K562 (cell line): ENCODE measurements at regions of chr5 and their contacts with region 1.

Region 1: DNA sequence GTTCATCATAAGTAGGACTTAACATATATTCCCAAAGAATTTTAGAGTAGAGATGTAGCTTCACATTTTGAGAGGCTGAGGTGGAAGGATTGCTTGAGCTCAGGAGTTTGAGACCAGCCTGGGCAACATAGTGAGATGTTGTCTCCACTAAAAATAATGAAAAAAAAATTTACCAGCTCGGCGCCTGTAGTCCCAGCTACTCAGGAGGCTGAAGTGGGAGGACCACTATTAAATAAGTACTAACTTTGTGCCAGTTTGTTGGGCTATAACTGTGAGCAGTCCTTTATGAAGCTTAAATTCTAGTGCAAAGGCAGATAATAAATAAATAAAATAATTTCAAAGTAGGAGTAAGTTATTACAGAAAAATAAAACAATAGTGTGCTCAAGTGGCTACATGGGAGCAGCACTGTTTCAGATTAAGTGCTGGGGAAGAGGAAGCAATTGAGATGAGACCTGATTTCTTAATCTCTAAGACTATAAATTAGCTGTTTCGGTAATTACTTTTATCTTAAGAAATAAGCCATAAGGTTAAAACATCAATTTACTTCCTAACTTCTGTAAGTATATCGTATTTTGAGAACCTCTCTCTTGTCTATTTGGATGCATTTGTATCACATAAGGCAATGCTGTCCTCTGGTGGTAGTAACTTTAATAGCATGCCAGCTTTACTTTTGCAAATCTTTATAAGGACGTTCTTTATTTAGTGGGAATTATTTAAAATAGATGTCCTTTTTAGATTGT is 98.9 kb downstream of the CSNK1G3 start:
- DNase-seq: peak; percentile 30 to 59 (median 42)
- ATAC-seq: peak; percentile 71
- H3K4me3 ChIP-seq: no peak overlapping the region
- H3K27ac ChIP-seq: no peak overlapping the region
- H3K4me1 ChIP-seq: no peaks in the 10 kb centered on the region
- H3K27me3 ChIP-seq: no peaks in the 10 kb centered on the region
- CTCF ChIP-seq: peak; percentile 51 to 92 (median 63); a peak in 5 of 6 replicates
- EP300 ChIP-seq: no peak
- POLR2A ChIP-seq: no peak
- RAD21 ChIP-seq: peak; percentile 91 to 95

Region 2: DNA sequence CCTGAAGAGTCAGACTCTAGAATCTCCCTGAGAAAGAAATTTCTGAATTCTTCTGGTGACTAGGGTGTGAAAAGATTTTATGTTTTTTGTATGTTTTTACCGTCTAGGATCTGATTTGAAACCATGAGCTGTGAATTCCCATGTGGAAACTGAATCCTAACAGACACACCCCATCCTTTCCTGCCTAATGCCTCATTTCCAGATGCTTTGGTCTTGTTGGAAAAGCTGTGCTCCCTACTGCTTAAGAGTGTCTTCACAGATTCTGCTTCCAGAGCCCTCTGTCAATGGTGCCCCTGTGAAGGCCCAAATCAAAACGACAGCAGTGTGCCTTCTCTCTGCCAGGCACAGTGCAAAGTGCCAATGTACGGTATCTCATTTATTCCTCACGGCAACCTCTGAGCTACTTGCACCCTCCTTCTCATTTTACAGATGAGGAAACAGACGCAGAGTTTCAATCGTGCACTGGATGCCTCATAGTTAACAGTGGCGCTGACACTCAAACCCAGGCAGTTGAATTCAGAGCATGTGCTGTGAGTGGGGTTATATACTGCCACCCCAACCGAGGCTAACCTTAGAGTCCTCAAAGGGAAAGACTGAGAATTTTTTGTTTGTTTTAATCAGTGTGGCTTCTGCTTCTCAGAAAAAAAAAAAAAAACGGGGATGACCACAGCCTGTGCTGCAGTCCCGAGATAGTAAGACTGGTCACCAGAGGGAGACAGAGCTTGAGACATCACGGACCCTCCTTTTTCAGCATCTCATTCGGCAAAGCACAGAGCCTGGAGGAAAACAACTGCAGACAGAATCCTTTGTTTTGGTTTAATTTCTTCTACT is 1110.4 kb before region 1 on chr5:
- CTCF ChIA-PET with region 1: interaction called, 7 read pairs
- POLR2A ChIA-PET with region 1: no interaction called
- in situ Hi-C with region 1: loop called (anchors 25 kb)
- intact Hi-C with region 1: loop called (anchors 5 kb)
- DNase-seq: peak; percentile 12 to 51 (median 34)
- ATAC-seq: peak; percentile 92
- H3K4me3 ChIP-seq: no peak overlapping the region
- H3K27ac ChIP-seq: no peak overlapping the region
- H3K4me1 ChIP-seq: no peaks in the 10 kb centered on the region
- H3K27me3 ChIP-seq: no peaks in the 10 kb centered on the region; a peak in 1 of 5 replicates
- CTCF ChIP-seq: peak; percentile 54 to 71 (median 63)
- EP300 ChIP-seq: no peak
- POLR2A ChIP-seq: no peak
- RAD21 ChIP-seq: peak in 1 of 2 experiments; percentile 57; a peak in 3 of 4 replicates

Region 3: DNA sequence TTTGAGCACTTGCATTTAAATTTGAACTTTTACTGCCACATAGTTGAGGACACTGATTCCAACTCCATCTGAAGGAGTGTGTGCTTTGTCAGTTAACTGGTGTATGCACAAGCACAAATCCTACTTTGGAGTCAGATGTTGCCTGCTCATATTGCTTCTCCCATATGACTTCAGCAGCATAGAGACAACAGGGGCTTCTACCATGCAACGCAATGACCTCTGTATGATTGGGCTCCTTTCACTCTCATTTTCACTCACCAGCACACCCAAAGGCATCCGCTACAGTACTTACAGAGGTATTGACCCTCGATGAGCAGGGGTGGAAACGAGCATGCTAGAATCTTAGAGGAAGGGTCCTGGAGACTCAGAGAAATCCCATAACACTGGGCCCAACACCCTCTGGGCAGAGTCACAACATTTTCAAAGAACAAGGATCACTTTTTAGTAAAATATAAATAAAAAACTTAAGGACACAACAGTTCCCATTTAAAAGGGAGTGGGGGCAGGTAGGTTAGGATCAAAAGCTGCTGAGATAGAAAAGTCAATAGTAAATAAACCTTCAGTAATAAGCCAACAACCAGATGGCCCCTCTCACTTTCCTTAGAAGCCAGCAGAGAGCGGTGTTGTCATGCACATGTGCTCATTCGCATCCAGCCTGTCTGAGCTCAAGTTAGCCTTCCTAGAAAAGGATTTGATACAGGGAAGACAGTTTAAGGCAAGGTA is 1095.0 kb before region 1 on chr5:
- CTCF ChIA-PET with region 1: no interaction called
- POLR2A ChIA-PET with region 1: no interaction called
- in situ Hi-C with region 1: loop called (anchors 25 kb)
- intact Hi-C with region 1: no loop called
- DNase-seq: peak; percentile 29 to 63 (median 36)
- ATAC-seq: peak; percentile 92
- H3K4me3 ChIP-seq: no peak overlapping the region
- H3K27ac ChIP-seq: no peak overlapping the region
- H3K4me1 ChIP-seq: no peaks in the 10 kb centered on the region
- H3K27me3 ChIP-seq: no peaks in the 10 kb centered on the region; a peak in 1 of 5 replicates
- CTCF ChIP-seq: peak; percentile 63 to 80 (median 67)
- EP300 ChIP-seq: no peak
- POLR2A ChIP-seq: no peak
- RAD21 ChIP-seq: peak; percentile 84 to 89

Region 4: DNA sequence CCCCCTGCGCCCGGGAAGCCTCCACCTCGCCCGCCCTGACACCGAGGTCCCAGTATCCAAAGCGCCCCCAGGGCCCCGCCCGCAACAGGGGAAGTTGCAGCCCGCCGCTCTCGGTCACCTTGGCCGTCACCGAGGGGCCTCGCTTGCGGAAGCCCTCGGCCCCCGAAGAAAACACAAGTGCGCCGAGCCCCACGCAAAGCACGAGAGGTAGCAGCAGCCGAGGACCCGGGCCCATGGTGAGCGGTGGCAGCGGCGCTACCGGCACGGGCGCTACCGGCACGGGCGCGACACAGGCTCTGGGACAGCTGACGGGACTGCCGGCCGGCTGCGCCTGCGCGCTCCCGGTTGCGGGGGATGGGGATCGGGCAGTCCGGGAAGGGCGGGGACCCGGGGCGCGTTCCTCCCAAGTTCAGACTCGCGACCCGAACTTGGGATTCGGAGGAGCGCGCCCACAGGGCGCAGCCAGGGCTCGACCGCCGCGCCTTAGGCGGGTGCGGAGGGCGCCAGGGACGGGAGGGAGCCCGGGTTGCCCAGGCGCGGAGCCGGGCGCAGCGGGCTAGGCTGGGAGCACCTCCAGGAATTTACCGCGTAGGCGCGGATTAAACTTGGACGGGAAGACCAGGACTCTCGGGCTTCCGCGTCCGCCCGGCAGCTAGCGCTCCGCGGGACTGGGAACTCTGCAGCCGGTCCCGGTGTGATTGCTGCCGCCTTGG is 574.3 kb before region 1 on chr5 and contains the start of gene PPIC:
- CTCF ChIA-PET with region 1: no interaction called
- POLR2A ChIA-PET with region 1: no interaction called
- in situ Hi-C with region 1: no loop called
- intact Hi-C with region 1: loop called (anchors 10 kb)
- DNase-seq: peak; percentile 69 to 83 (median 74)
- ATAC-seq: peak; percentile 89
- H3K4me3 ChIP-seq: peak within 1 kb of the TSS; percentile 55
- H3K27ac ChIP-seq: no peak within 1 kb of the TSS
- H3K4me1 ChIP-seq: peaks cover 2 to 18% of the 10 kb centered on the region in 2 experiments; a peak in 2 of 5 replicates
- H3K27me3 ChIP-seq: peaks cover 7 to 21% of the 10 kb centered on the region in 2 experiments; a peak in 4 of 5 replicates
- CTCF ChIP-seq: no peak
- EP300 ChIP-seq: no peak
- POLR2A ChIP-seq: no peak
- RAD21 ChIP-seq: no peak
- polyA plus RNA-seq, gene PPIC: 1.3 to 2.8 TPM

Region 5: GRCh38 chr5:123209502-123210012 is 401.3 kb before region 1 on chr5:
- CTCF ChIA-PET with region 1: no interaction called
- POLR2A ChIA-PET with region 1: no interaction called
- in situ Hi-C with region 1: no loop called
- intact Hi-C with region 1: loop called (anchors 10 kb)
- DNase-seq: peak; percentile 35 to 58 (median 44)
- ATAC-seq: peak; percentile 92
- H3K4me3 ChIP-seq: no peak overlapping the region
- H3K27ac ChIP-seq: peak overlapping the region; percentile 57; the same call in 2 of the 3 replicates
- H3K4me1 ChIP-seq: peaks cover 2 to 15% of the 10 kb centered on the region in 2 experiments; a peak in 4 of 5 replicates
- H3K27me3 ChIP-seq: no peaks in the 10 kb centered on the region; a peak in 1 of 5 replicates
- CTCF ChIP-seq: no peak
- EP300 ChIP-seq: no peak
- POLR2A ChIP-seq: no peak
- RAD21 ChIP-seq: no peak

Region 6: DNA sequence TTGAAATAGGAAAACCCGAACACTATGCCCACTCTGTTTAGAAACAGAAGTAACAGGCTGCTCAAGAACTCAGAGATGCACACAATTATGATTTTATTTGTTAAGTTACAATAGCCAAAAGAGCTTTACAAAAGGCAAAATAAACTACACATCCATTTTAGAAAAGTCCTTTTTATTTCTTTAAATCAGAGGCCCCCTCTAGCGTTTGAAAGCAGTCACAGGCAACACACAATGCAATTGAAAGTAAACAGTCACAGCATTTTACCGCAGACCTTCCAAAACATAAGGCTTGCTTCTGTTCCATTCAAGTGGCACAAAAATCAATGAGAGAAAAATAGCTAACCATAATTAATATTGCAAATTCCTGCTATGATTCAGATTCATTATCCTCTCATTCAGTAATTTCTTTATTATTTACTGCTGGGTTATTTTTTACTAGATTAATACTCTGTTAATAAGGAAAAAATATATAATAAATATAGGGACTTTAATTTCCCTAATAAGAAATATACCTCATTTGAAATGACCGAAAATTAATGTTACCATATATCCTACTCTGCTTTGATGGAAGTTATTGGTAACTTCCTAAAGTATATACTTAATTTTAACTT is 265.9 kb before region 1 on chr5:
- CTCF ChIA-PET with region 1: no interaction called
- POLR2A ChIA-PET with region 1: no interaction called
- in situ Hi-C with region 1: no loop called
- intact Hi-C with region 1: loop called (anchors 10 kb)
- DNase-seq: peak in 2 of 4 experiments; percentile 5 to 19
- ATAC-seq: peak; percentile 68
- H3K4me3 ChIP-seq: no peak overlapping the region
- H3K27ac ChIP-seq: no peak overlapping the region
- H3K4me1 ChIP-seq: no peaks in the 10 kb centered on the region
- H3K27me3 ChIP-seq: no peaks in the 10 kb centered on the region
- CTCF ChIP-seq: peak; percentile 35 to 60 (median 54); a peak in 5 of 6 replicates
- EP300 ChIP-seq: no peak
- POLR2A ChIP-seq: no peak
- RAD21 ChIP-seq: peak; percentile 27 to 60; a peak in 3 of 4 replicates

Region 7: GRCh38 chr5:123423278-123424149 is 187.3 kb before region 1 on chr5 and contains the start of gene CEP120:
- CTCF ChIA-PET with region 1: interaction called, 3 read pairs
- POLR2A ChIA-PET with region 1: no interaction called
- in situ Hi-C with region 1: no loop called
- intact Hi-C with region 1: loop called (anchors 10 kb)
- DNase-seq: peak; percentile 93 to 99 (median 95)
- ATAC-seq: peak; percentile 99
- H3K4me3 ChIP-seq: peak within 1 kb of the TSS; percentile 89
- H3K27ac ChIP-seq: peak within 1 kb of the TSS; percentile 75
- H3K4me1 ChIP-seq: peaks cover 4 to 6% of the 10 kb centered on the region in 2 experiments; a peak in 3 of 5 replicates
- H3K27me3 ChIP-seq: no peaks in the 10 kb centered on the region
- CTCF ChIP-seq: peak; percentile 84 to 97 (median 92)
- EP300 ChIP-seq: peak; percentile 27; the same call in 1 of the 2 replicates
- POLR2A ChIP-seq: peak; percentile 86
- RAD21 ChIP-seq: peak; percentile 62 to 69
- polyA plus RNA-seq, gene CEP120: 3.3 to 3.9 TPM

Region 8: GRCh38 chr5:123844873-123845272 is 234.0 kb after region 1 on chr5:
- CTCF ChIA-PET with region 1: no interaction called
- POLR2A ChIA-PET with region 1: no interaction called
- in situ Hi-C with region 1: no loop called
- intact Hi-C with region 1: no loop called
- DNase-seq: no peak
- ATAC-seq: no peak
- H3K4me3 ChIP-seq: no peak overlapping the region
- H3K27ac ChIP-seq: no peak overlapping the region
- H3K4me1 ChIP-seq: no peaks in the 10 kb centered on the region
- H3K27me3 ChIP-seq: no peaks in the 10 kb centered on the region
- CTCF ChIP-seq: no peak
- EP300 ChIP-seq: no peak
- POLR2A ChIP-seq: no peak
- RAD21 ChIP-seq: no peak